Naive thymus-derived CD4-positive, alpha-beta T cell (primary cell): ENCODE measurements at regions of chr11 and their contacts with region 1.

Region 1: DNA sequence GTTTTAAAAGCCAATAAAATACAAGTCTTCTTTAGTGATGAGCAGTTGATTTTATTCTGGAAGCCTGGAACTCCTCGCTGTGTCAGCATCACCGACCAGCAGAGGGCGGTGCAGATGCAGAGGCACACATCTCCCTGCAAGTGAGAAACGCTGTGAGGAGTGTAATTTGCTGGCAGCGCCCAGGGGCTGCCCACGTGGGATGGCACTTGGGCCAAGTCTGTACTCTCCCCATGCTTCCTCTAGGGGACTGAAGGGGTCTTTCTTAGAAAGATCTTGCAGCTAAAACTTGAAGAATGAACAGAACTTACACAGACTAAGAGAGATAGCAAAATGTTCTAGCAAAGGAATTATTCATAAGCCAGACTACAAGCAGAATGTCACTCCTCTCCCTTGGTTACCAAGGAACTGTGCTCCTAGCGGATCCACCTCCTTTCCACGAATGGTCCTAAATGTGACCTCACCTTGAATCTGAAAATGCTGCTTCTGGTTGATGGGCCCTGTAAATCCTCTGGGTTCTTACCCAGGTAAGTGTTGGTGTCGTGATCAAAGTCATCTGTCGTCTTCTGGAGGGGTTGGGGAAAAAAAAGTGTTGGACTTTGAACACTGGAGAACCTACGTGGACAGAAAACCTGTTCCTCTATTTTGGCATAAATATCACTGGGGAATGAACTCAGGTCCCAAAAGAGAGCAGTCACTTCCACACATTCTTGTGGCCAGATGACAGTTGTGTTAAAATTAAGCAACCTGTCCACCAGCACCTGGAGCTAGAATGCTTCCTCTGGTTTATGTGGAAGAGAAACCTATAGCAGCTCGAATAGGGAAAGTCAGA is 31.8 kb downstream of the CNTF start:
- DNase-seq: peak; percentile 56 to 81 (median 73)
- ATAC-seq: peak; percentile 98
- H3K4me3 ChIP-seq: no peak overlapping the region
- H3K4me3 Mint-ChIP-seq: no peak overlapping the region
- H3K27ac ChIP-seq: no peak overlapping the region
- H3K27ac Mint-ChIP-seq: peak overlapping the region in 3 of 9 donors; percentile 18 to 33 (median 27)
- H3K4me1 ChIP-seq: no peaks in the 10 kb centered on the region
- H3K4me1 Mint-ChIP-seq: peaks cover 0 to 11% (median 5%) of the 10 kb centered on the region in 7 donors
- H3K27me3 ChIP-seq: no peaks in the 10 kb centered on the region
- H3K27me3 Mint-ChIP-seq: peaks cover 0 to 3% (median 0%) of the 10 kb centered on the region in 5 donors

Region 2: GRCh38 chr11:58640386-58641023 is 13.8 kb before region 1 on chr11:
- CTCF ChIA-PET with region 1: interaction called, 6 read pairs
- POLR2A ChIA-PET with region 1: no interaction called
- intact Hi-C with region 1: loop called in 1 of 2 experiments (anchors 1 kb)
- DNase-seq: peak in 7 of 9 donors; percentile 10 to 55 (median 39)
- ATAC-seq: peak; percentile 76
- H3K4me3 ChIP-seq: no peak overlapping the region
- H3K4me3 Mint-ChIP-seq: peak overlapping the region in 9 of 10 donors; percentile 25 to 76 (median 66)
- H3K27ac ChIP-seq: peak overlapping the region; percentile 30
- H3K27ac Mint-ChIP-seq: peak overlapping the region in 8 of 9 donors; percentile 81 to 95 (median 89)
- H3K4me1 ChIP-seq: peaks cover 14 to 24% of the 10 kb centered on the region in 2 donors
- H3K4me1 Mint-ChIP-seq: peaks cover 13 to 31% (median 26%) of the 10 kb centered on the region in 7 donors
- H3K27me3 ChIP-seq: no peaks in the 10 kb centered on the region
- H3K27me3 Mint-ChIP-seq: peaks cover 0 to 9% (median 0%) of the 10 kb centered on the region in 5 donors

Region 3: DNA sequence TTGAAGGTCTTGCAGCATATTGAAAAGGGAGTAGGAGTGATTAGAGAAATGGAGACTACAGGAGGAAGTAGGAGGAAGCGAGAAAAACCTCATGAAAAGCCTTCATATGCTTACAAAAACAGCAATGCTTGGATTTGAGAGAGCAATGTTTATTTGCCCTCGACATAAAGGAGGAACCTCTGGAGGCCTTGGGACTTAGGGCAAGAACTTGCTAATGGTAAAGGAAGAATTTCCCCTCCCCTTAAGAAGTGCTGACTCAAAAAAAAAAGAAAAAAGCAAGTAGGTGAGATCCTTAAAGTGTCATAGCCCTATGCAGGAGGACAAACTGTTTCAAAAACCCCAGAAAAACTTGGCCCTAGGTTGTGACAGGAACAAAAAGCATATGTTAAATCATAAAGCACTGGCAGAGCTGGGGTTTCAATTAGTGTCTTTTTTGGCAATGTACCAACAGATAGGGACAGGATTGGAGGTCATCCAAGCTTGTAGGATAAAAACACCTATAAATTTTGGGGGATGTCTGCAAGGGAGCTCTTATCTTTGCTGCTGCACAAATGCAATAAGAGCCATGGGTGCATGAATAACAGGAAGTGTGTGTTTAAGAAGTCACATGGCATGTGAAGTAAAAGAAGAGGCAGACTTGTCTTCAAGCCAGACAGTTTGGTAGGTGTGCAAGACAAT is 72.6 kb after region 1 on chr11:
- CTCF ChIA-PET with region 1: no interaction called
- POLR2A ChIA-PET with region 1: no interaction called
- intact Hi-C with region 1: loop called in 1 of 2 experiments (anchors 2 kb)
- DNase-seq: peak in 7 of 9 donors; percentile 39 to 79 (median 73)
- ATAC-seq: peak; percentile 84
- H3K4me3 ChIP-seq: no peak overlapping the region
- H3K4me3 Mint-ChIP-seq: peak overlapping the region; percentile 33 to 86 (median 62)
- H3K27ac ChIP-seq: peak overlapping the region; percentile 60
- H3K27ac Mint-ChIP-seq: peak overlapping the region; percentile 58 to 99 (median 97)
- H3K4me1 ChIP-seq: peaks cover 4 to 41% of the 10 kb centered on the region in 2 donors
- H3K4me1 Mint-ChIP-seq: peaks cover 16 to 67% (median 54%) of the 10 kb centered on the region in 7 donors
- H3K27me3 ChIP-seq: no peaks in the 10 kb centered on the region
- H3K27me3 Mint-ChIP-seq: no peaks in the 10 kb centered on the region

Region 4: DNA sequence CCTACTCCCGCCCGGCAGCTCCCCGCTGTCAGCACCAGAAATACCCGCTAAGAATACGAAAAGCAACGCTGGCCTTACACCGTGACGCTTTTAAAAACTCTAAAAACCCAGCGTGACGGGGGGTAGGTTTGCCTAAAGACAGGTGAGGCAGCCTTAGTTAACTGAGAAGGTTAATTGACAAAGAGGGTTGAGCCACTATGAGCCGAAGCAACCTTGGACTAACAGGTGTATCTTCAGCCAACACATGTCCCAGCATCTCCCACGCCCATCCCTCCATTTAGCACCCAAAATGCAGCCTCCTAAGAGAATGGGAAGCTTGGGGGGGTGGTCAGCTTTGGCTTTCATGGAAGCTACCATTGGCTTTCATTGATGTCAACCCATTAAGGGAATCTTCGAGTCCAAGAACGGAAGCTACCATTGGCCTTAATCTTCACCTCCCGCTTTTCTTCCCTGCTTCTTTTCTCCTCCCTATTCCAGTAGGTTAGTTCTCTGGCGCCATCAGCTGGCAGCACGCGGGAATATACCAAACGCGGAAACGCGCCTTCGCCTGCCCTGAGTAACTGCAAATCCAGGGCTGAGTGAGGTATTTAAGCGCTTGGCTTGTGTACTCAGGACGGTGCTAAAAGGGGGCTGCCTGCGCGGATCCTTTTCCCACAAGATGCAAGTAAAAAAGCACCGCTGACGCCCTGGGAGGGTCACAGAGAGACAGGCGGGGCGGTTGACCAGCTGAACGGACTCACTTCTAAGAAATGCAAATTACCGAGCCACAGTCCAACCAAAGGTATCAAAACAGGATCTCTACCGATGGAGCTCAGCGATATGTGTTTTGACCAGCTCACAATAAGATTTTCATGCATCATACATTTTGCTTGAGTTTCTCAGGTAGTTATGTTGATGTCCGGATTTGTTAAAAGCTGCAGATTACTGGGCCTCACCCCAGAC is 246.5 kb after region 1 on chr11:
- CTCF ChIA-PET with region 1: no interaction called
- POLR2A ChIA-PET with region 1: no interaction called
- intact Hi-C with region 1: loop called (anchors 1 to 5 kb)
- DNase-seq: peak in 3 of 9 donors; percentile 3 to 37 (median 15)
- ATAC-seq: peak; percentile 40
- H3K4me3 ChIP-seq: no peak overlapping the region
- H3K4me3 Mint-ChIP-seq: no peak overlapping the region
- H3K27ac ChIP-seq: no peak overlapping the region
- H3K27ac Mint-ChIP-seq: no peak overlapping the region
- H3K4me1 ChIP-seq: no peaks in the 10 kb centered on the region
- H3K4me1 Mint-ChIP-seq: peaks cover 0 to 3% (median 0%) of the 10 kb centered on the region in 7 donors
- H3K27me3 ChIP-seq: peaks cover 0 to 3% of the 10 kb centered on the region in 2 donors
- H3K27me3 Mint-ChIP-seq: peaks cover 42 to 79% (median 63%) of the 10 kb centered on the region in 5 donors

Region 5: DNA sequence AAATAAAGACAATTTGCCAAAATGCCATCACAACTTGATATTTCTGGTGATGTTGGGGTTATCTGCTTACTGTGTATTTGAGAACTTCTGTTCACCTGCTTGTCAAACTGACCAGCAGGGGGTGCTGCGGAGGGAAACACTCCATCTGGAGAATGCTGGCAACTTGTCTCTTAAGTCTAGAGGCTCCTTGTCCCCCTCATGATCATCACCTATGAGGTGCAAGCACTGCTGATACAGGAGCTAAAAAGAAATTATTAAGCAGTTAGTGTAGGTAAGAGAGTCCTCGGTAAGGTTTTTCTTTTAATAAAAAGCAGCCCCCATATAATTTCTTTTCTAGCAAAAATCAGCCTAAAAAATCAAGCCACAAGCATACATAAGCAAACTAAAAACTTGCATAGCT is 399.1 kb after region 1 on chr11:
- CTCF ChIA-PET with region 1: no interaction called
- POLR2A ChIA-PET with region 1: no interaction called
- intact Hi-C with region 1: loop called (anchors 1 to 10 kb)
- DNase-seq: peak; percentile 44 to 84 (median 69)
- ATAC-seq: peak; percentile 82
- H3K4me3 ChIP-seq: no peak overlapping the region
- H3K4me3 Mint-ChIP-seq: no peak overlapping the region
- H3K27ac ChIP-seq: no peak overlapping the region
- H3K27ac Mint-ChIP-seq: no peak overlapping the region
- H3K4me1 ChIP-seq: no peaks in the 10 kb centered on the region
- H3K4me1 Mint-ChIP-seq: peaks cover 5 to 7% (median 6%) of the 10 kb centered on the region in 7 donors
- H3K27me3 ChIP-seq: no peaks in the 10 kb centered on the region
- H3K27me3 Mint-ChIP-seq: peaks cover 2 to 30% (median 11%) of the 10 kb centered on the region in 5 donors

Region 6: GRCh38 chr11:59158206-59159068 is 504.1 kb after region 1 on chr11:
- CTCF ChIA-PET with region 1: interaction called, 3 read pairs
- POLR2A ChIA-PET with region 1: no interaction called
- intact Hi-C with region 1: loop called (anchors 1 to 2 kb)
- DNase-seq: peak in 8 of 9 donors; percentile 53 to 75 (median 70)
- ATAC-seq: peak; percentile 97
- H3K4me3 ChIP-seq: no peak overlapping the region
- H3K4me3 Mint-ChIP-seq: peak overlapping the region in 1 of 10 donors; percentile 18
- H3K27ac ChIP-seq: no peak overlapping the region
- H3K27ac Mint-ChIP-seq: peak overlapping the region in 7 of 9 donors; percentile 8 to 65 (median 50)
- H3K4me1 ChIP-seq: no peaks in the 10 kb centered on the region
- H3K4me1 Mint-ChIP-seq: peaks cover 4 to 16% (median 5%) of the 10 kb centered on the region in 7 donors
- H3K27me3 ChIP-seq: no peaks in the 10 kb centered on the region
- H3K27me3 Mint-ChIP-seq: peaks cover 9 to 14% (median 9%) of the 10 kb centered on the region in 5 donors

Region 7: DNA sequence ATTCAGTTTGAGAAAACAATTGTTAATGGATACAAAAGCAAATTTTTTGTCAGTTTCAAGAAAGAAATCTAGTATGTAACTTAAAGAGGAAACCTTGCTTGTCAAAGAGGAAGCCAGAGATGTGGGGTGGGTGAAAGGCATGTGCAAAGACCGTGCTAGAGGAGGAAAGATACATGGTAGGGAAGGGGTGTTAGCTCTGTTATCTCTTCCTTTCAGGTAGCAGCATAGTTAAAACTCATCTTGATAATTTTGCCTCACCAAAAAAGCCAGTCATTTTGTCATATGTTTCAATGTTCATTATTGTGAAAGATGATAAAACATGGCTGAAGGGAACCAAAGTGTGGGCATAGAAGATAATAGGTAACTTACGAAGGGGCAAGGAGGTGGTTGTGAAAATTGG is 1431.6 kb after region 1 on chr11:
- CTCF ChIA-PET with region 1: no interaction called
- POLR2A ChIA-PET with region 1: no interaction called
- intact Hi-C with region 1: no loop called
- DNase-seq: no peak
- ATAC-seq: peak; percentile 45
- H3K4me3 ChIP-seq: no peak overlapping the region
- H3K4me3 Mint-ChIP-seq: no peak overlapping the region
- H3K27ac ChIP-seq: no peak overlapping the region
- H3K27ac Mint-ChIP-seq: no peak overlapping the region
- H3K4me1 ChIP-seq: no peaks in the 10 kb centered on the region
- H3K4me1 Mint-ChIP-seq: no peaks in the 10 kb centered on the region
- H3K27me3 ChIP-seq: no peaks in the 10 kb centered on the region
- H3K27me3 Mint-ChIP-seq: peaks cover 4 to 46% (median 17%) of the 10 kb centered on the region in 5 donors